ENCODE measurements at regions of chr3 and their contacts with region 1.

Region 1: GRCh38 chr3:71208211-71209108 is 375.1 kb downstream of the FOXP1 start:
- DNase-seq: peak; percentile 84 to 88
- H3K4me3 ChIP-seq: no peak overlapping the region
- H3K4me3 Mint-ChIP-seq: peak overlapping the region; percentile 66
- H3K27ac Mint-ChIP-seq: peak overlapping the region; percentile 93
- H3K4me1 ChIP-seq: peaks cover 60% of the 10 kb centered on the region
- H3K4me1 Mint-ChIP-seq: peaks cover 54% of the 10 kb centered on the region
- H3K27me3 ChIP-seq: no peaks in the 10 kb centered on the region
- H3K27me3 Mint-ChIP-seq: no peaks in the 10 kb centered on the region
- CTCF ChIP-seq: no peak

Region 2: GRCh38 chr3:70999730-71000129 is 208.7 kb before region 1 on chr3:
- CTCF ChIA-PET with region 1: no interaction called
- POLR2A ChIA-PET with region 1: no interaction called
- intact Hi-C with region 1: no loop called
- DNase-seq: no peak
- H3K4me3 ChIP-seq: no peak overlapping the region
- H3K4me3 Mint-ChIP-seq: no peak overlapping the region
- H3K27ac Mint-ChIP-seq: no peak overlapping the region
- H3K4me1 ChIP-seq: no peaks in the 10 kb centered on the region
- H3K4me1 Mint-ChIP-seq: no peaks in the 10 kb centered on the region
- H3K27me3 ChIP-seq: no peaks in the 10 kb centered on the region
- H3K27me3 Mint-ChIP-seq: no peaks in the 10 kb centered on the region
- CTCF ChIP-seq: no peak

Region 3: GRCh38 chr3:71064288-71064955 is 144.0 kb before region 1 on chr3:
- CTCF ChIA-PET with region 1: interaction called, 3 read pairs
- POLR2A ChIA-PET with region 1: interaction called, 4 read pairs
- intact Hi-C with region 1: loop called (anchors 2 kb)
- DNase-seq: peak; percentile 56 to 70
- H3K4me3 ChIP-seq: peak overlapping the region; percentile 58
- H3K4me3 Mint-ChIP-seq: no peak overlapping the region
- H3K27ac Mint-ChIP-seq: no peak overlapping the region
- H3K4me1 ChIP-seq: peaks cover 55% of the 10 kb centered on the region
- H3K4me1 Mint-ChIP-seq: peaks cover 44% of the 10 kb centered on the region
- H3K27me3 ChIP-seq: no peaks in the 10 kb centered on the region
- H3K27me3 Mint-ChIP-seq: no peaks in the 10 kb centered on the region
- CTCF ChIP-seq: no peak

Region 4: DNA sequence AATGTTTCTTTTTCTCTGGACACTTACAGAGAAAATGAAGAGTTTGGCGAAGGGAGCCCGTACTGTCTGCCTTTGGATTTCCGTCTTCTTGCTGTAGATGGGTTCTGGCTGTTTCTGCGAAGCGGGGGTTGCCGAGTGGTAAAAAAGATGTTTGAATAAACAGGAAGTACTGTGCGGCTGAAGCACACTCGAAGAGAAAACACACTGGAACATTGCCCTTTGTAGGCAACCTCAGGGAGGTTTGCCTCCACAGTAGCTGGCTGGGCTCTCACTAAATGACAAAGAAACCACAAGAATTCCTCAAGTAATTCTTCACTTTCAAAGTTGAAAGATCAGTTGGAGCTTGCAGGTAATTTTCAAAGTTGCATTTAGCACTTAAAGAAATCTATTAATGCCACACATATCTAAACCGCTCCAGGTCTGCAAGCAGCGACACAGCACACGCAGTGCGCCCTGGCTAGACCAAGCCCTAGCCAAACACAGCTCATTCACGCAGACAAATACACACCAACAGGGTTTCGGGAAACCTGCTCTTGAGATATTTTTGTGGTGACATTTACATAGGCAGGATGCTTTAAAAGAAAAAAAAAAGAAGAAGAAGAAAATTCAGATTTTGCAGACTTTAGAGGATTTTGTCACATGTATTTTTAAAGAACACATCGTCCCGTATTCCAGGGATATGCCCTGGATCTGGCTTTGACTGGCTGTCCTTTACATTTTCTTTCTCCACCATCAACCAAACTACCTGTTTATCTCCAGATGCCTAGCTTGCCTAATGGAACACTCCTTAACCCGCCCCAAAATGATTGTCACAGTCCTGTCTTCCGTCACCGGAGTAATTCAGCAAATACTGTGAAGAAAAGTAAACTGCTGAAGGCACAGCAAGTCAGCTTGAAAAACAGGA is 77.7 kb before region 1 on chr3:
- CTCF ChIA-PET with region 1: interaction called, 4 read pairs
- POLR2A ChIA-PET with region 1: interaction called, 3 read pairs
- intact Hi-C with region 1: loop called (anchors 1 kb)
- DNase-seq: peak in 1 of 2 experiments; percentile 56
- H3K4me3 ChIP-seq: peak overlapping the region; percentile 50
- H3K4me3 Mint-ChIP-seq: peak overlapping the region; percentile 94
- H3K27ac Mint-ChIP-seq: peak overlapping the region; percentile 83
- H3K4me1 ChIP-seq: peaks cover 66% of the 10 kb centered on the region
- H3K4me1 Mint-ChIP-seq: peaks cover 37% of the 10 kb centered on the region
- H3K27me3 ChIP-seq: no peaks in the 10 kb centered on the region
- H3K27me3 Mint-ChIP-seq: no peaks in the 10 kb centered on the region
- CTCF ChIP-seq: no peak

Region 5: DNA sequence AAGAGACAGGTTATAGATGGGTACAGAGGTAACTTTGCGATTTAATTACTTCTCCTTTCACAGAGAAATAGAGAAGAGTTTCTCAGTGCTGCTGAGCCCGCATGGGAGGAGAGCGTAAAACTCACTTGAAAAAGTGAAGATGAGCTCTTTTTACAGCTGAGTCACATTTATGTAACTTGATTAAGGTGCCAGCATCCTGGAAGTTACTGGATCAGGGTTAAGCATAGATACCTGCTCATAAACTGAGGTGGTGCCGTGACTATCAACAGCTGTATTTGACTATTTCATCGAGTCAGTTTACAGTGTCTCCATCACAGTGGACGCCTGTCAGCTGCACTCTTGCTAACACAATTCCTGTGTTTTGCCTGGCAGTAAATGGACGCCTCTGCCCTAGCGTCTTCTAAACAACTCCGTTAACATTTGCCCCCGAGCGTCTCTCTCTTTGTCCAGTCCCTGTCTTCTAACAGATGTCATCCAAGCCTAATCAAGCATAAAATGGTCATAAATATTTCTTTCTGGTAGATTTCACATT is 39.5 kb before region 1 on chr3:
- CTCF ChIA-PET with region 1: no interaction called
- POLR2A ChIA-PET with region 1: interaction called, 4 read pairs
- intact Hi-C with region 1: loop called (anchors 1 kb)
- DNase-seq: no peak
- H3K4me3 ChIP-seq: peak overlapping the region; percentile 1
- H3K4me3 Mint-ChIP-seq: peak overlapping the region; percentile 58
- H3K27ac Mint-ChIP-seq: peak overlapping the region; percentile 83
- H3K4me1 ChIP-seq: peaks cover 81% of the 10 kb centered on the region
- H3K4me1 Mint-ChIP-seq: peaks cover 66% of the 10 kb centered on the region
- H3K27me3 ChIP-seq: no peaks in the 10 kb centered on the region
- H3K27me3 Mint-ChIP-seq: no peaks in the 10 kb centered on the region
- CTCF ChIP-seq: no peak

Region 6: GRCh38 chr3:71247221-71247976 is 38.9 kb after region 1 on chr3:
- CTCF ChIA-PET with region 1: interaction called, 3 read pairs
- POLR2A ChIA-PET with region 1: no interaction called
- intact Hi-C with region 1: loop called (anchors 1 kb)
- DNase-seq: peak; percentile 75 to 88
- H3K4me3 ChIP-seq: no peak overlapping the region
- H3K4me3 Mint-ChIP-seq: peak overlapping the region; percentile 24
- H3K27ac Mint-ChIP-seq: peak overlapping the region; percentile 83
- H3K4me1 ChIP-seq: peaks cover 69% of the 10 kb centered on the region
- H3K4me1 Mint-ChIP-seq: peaks cover 57% of the 10 kb centered on the region
- H3K27me3 ChIP-seq: no peaks in the 10 kb centered on the region
- H3K27me3 Mint-ChIP-seq: no peaks in the 10 kb centered on the region
- CTCF ChIP-seq: no peak

Region 7: GRCh38 chr3:71416876-71417275 is 208.4 kb after region 1 on chr3:
- CTCF ChIA-PET with region 1: no interaction called
- POLR2A ChIA-PET with region 1: no interaction called
- intact Hi-C with region 1: loop called (anchors 1 kb)
- DNase-seq: peak; percentile 61 to 67
- H3K4me3 ChIP-seq: no peak overlapping the region
- H3K4me3 Mint-ChIP-seq: peak overlapping the region; percentile 63
- H3K27ac Mint-ChIP-seq: peak overlapping the region; percentile 96
- H3K4me1 ChIP-seq: peaks cover 38% of the 10 kb centered on the region
- H3K4me1 Mint-ChIP-seq: peaks cover 44% of the 10 kb centered on the region
- H3K27me3 ChIP-seq: no peaks in the 10 kb centered on the region
- H3K27me3 Mint-ChIP-seq: no peaks in the 10 kb centered on the region
- CTCF ChIP-seq: peak; percentile 35 to 39